ENCODE measurements at regions of chr1 and their contacts with region 1.

Region 1: GRCh38 chr1:11337580-11338073 is 64.6 kb downstream of the UBIAD1 start:
- DNase-seq: peak; percentile 71 to 80
- ATAC-seq: no peak
- H3K4me3 ChIP-seq: no peak overlapping the region
- H3K4me3 Mint-ChIP-seq: no peak overlapping the region
- H3K27ac ChIP-seq: no peak overlapping the region
- H3K27ac Mint-ChIP-seq: peak overlapping the region in 1 of 2 donors; percentile 42
- H3K4me1 ChIP-seq: peaks cover 44% of the 10 kb centered on the region
- H3K4me1 Mint-ChIP-seq: peaks cover 38 to 54% of the 10 kb centered on the region in 2 donors
- H3K27me3 ChIP-seq: no peaks in the 10 kb centered on the region
- H3K27me3 Mint-ChIP-seq: peaks cover 6 to 11% of the 10 kb centered on the region in 2 donors
- CTCF ChIP-seq: peak; percentile 82

Region 2: DNA sequence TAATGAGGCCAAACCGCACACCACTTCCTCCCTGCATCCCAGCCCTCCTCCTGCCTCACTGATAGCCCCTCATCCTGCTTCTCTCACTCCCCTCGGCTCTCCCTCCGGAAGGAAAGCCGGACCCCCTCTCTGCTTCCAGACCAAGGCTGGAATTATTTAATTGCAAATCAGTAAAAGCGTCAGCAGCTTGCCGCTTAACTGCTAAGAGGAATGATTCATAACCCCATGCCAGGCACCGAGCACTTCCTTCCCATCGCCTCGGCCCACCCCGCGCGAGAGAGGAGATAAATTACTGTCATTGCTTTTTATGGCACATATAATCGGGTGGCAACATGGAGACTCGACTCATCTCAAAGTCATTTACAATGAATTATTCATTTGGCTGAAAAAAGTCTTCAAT is 12.6 kb after region 1 on chr1:
- intact Hi-C with region 1: loop called (anchors 2 kb)
- DNase-seq: no peak
- ATAC-seq: peak in 2 of 3 donors; percentile 58 to 71
- H3K4me3 ChIP-seq: no peak overlapping the region
- H3K4me3 Mint-ChIP-seq: peak overlapping the region; percentile 75
- H3K27ac ChIP-seq: no peak overlapping the region
- H3K27ac Mint-ChIP-seq: peak overlapping the region; percentile 34 to 70
- H3K4me1 ChIP-seq: peaks cover 35% of the 10 kb centered on the region
- H3K4me1 Mint-ChIP-seq: peaks cover 43% of the 10 kb centered on the region in 2 donors
- H3K27me3 ChIP-seq: no peaks in the 10 kb centered on the region
- H3K27me3 Mint-ChIP-seq: peaks cover 0 to 3% of the 10 kb centered on the region in 2 donors
- CTCF ChIP-seq: no peak

Region 3: GRCh38 chr1:11388617-11389016 is 51.0 kb after region 1 on chr1:
- intact Hi-C with region 1: no loop called
- DNase-seq: no peak
- ATAC-seq: no peak
- H3K4me3 ChIP-seq: no peak overlapping the region
- H3K4me3 Mint-ChIP-seq: no peak overlapping the region
- H3K27ac ChIP-seq: no peak overlapping the region
- H3K27ac Mint-ChIP-seq: no peak overlapping the region
- H3K4me1 ChIP-seq: peaks cover 10% of the 10 kb centered on the region
- H3K4me1 Mint-ChIP-seq: peaks cover 9 to 10% of the 10 kb centered on the region in 2 donors
- H3K27me3 ChIP-seq: no peaks in the 10 kb centered on the region
- H3K27me3 Mint-ChIP-seq: peaks cover 10 to 23% of the 10 kb centered on the region in 2 donors
- CTCF ChIP-seq: no peak

Region 4: DNA sequence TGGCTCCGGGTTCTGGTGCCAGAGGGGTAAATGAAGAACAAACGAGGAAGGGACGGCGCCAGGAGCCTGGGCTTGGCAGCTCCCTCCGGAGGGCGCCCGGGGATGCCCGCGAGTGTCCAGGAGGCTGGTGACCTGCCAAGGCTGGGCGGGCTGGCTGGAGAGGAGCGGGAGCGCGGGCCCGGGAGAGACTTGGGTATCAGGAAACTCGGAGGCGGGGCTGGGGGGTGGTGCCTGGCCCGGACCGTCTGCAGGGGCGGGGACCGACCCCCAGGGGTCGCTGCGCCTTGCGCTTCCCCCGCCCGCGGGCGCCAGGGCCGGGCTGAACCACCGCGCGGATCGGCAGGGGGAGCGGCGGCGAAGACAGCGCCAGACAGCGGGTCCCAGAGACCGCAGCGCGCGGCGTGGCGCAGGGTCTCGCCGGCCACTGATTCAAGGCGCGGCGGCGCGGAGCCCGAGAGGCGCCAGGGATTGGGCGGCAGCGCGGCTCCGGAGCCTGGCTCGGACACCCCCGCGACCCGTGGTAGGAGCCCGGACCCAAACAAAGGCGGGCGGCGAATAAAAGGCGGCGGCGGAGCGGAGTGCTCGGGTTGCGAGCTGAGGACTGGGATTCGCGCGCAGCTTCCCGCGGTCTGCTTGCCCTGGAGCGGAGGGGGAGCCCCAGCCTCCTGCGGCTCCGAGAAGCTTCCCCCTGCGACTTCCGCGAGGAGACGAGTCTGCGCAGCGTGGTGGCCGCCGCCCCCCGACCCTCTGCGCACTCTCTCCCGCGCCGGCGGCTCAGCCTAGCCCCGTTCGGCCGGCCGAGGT is 141.1 kb after region 1 on chr1 and contains the start of gene DISP3:
- intact Hi-C with region 1: loop called (anchors 5 kb)
- DNase-seq: peak; percentile 60 to 82
- ATAC-seq: peak; percentile 87 to 96 (median 91)
- H3K4me3 ChIP-seq: peak within 1 kb of the TSS; percentile 39
- H3K4me3 Mint-ChIP-seq: peak within 1 kb of the TSS; percentile 82
- H3K27ac ChIP-seq: no peak within 1 kb of the TSS
- H3K27ac Mint-ChIP-seq: no peak within 1 kb of the TSS
- H3K4me1 ChIP-seq: peaks cover 16% of the 10 kb centered on the region
- H3K4me1 Mint-ChIP-seq: peaks cover 5 to 13% of the 10 kb centered on the region in 2 donors
- H3K27me3 ChIP-seq: peaks cover 24% of the 10 kb centered on the region
- H3K27me3 Mint-ChIP-seq: peaks cover 29 to 33% of the 10 kb centered on the region in 2 donors
- CTCF ChIP-seq: peak; percentile 38
- total RNA-seq, gene DISP3: 0.24 to 0.68 (median 0.60) TPM

Region 5: GRCh38 chr1:11641776-11642305 is 304.2 kb after region 1 on chr1:
- intact Hi-C with region 1: loop called (anchors 5 kb)
- DNase-seq: no peak
- ATAC-seq: no peak
- H3K4me3 ChIP-seq: no peak overlapping the region
- H3K4me3 Mint-ChIP-seq: no peak overlapping the region
- H3K27ac ChIP-seq: no peak overlapping the region
- H3K27ac Mint-ChIP-seq: no peak overlapping the region
- H3K4me1 ChIP-seq: no peaks in the 10 kb centered on the region
- H3K4me1 Mint-ChIP-seq: peaks cover 0 to 9% of the 10 kb centered on the region in 2 donors
- H3K27me3 ChIP-seq: peaks cover 4% of the 10 kb centered on the region
- H3K27me3 Mint-ChIP-seq: no peaks in the 10 kb centered on the region
- CTCF ChIP-seq: no peak